MCF 10A (cell line): ENCODE measurements at regions of chr7 and their contacts with region 1.

Region 1: GRCh38 chr7:33716581-33717477 is 188.5 kb upstream of the BMPER start:
- DNase-seq: peak; percentile 63
- H3K4me3 Mint-ChIP-seq: no peak overlapping the region
- H3K27ac Mint-ChIP-seq: no peak overlapping the region
- H3K4me1 Mint-ChIP-seq: peaks cover 5% of the 10 kb centered on the region
- H3K27me3 Mint-ChIP-seq: peaks cover 15% of the 10 kb centered on the region
- CTCF ChIP-seq: peak; percentile 81

Region 2: DNA sequence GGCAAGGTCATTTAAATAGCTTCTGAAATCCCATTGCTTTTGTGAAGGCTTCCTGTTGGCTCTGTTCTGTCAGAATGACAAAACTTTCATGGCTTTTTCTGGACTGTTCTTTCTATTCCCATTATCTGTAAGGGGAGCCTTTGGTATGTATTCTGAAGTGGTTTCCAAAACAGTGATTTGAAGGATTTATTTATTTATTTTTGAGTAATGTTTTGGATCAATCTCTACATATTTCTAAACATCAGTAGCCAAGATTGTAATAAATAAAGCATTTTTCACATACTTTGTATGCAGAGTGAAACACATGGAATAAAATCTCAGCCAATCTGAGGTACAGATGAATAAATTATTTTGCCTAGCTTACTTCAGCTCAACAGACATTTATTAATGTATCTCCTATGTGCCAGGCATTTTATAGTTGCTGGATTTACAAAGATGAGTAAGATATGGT is 466.4 kb before region 1 on chr7:
- CTCF ChIA-PET with region 1: no interaction called
- POLR2A ChIA-PET with region 1: no interaction called
- intact Hi-C with region 1: no loop called
- DNase-seq: no peak
- H3K4me3 Mint-ChIP-seq: no peak overlapping the region
- H3K27ac Mint-ChIP-seq: no peak overlapping the region
- H3K4me1 Mint-ChIP-seq: no peaks in the 10 kb centered on the region
- H3K27me3 Mint-ChIP-seq: no peaks in the 10 kb centered on the region
- CTCF ChIP-seq: no peak

Region 3: DNA sequence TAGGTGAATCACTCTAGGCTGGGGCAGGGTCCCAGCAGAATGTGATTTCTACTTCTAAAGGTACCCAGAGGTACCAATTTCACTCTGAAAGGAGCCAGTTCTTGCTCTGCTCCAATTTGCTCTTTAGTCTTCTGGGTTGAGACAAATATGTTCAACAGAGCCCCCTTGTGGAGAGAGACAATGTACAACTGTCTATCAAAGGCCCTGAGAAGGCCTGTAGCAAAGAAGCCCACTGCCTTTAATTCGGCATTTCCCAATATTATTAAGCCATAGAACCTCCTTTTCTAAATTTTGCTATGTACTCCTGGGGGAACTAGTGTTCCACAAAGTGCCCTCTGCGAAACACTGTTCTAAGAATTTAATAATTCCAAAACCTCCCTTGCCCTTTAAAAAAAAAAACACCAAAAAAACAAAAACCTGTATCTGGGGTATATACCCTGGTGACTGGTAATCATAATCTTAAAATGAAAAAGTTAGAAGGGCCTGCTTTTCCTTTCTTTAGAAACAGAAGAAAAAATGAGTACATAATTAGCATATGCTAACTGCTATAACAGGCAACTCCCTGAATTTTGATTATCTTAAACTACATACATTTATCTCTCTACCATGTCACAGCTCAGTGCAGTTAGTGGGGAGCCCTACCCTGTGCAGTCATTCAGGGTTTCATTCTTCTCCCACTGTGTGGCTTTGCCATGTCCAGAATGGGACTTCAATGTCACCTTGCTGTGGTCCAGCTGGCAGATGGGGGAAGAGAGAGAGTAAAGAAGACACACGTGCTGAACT is 27.7 kb after region 1 on chr7:
- CTCF ChIA-PET with region 1: interaction called, 12 read pairs
- POLR2A ChIA-PET with region 1: no interaction called
- intact Hi-C with region 1: no loop called
- DNase-seq: peak; percentile 71
- H3K4me3 Mint-ChIP-seq: no peak overlapping the region
- H3K27ac Mint-ChIP-seq: peak overlapping the region; percentile 90
- H3K4me1 Mint-ChIP-seq: peaks cover 23% of the 10 kb centered on the region
- H3K27me3 Mint-ChIP-seq: no peaks in the 10 kb centered on the region
- CTCF ChIP-seq: peak; percentile 27